ENCODE measurements at regions of chr11 and their contacts with region 1.

Region 1: DNA sequence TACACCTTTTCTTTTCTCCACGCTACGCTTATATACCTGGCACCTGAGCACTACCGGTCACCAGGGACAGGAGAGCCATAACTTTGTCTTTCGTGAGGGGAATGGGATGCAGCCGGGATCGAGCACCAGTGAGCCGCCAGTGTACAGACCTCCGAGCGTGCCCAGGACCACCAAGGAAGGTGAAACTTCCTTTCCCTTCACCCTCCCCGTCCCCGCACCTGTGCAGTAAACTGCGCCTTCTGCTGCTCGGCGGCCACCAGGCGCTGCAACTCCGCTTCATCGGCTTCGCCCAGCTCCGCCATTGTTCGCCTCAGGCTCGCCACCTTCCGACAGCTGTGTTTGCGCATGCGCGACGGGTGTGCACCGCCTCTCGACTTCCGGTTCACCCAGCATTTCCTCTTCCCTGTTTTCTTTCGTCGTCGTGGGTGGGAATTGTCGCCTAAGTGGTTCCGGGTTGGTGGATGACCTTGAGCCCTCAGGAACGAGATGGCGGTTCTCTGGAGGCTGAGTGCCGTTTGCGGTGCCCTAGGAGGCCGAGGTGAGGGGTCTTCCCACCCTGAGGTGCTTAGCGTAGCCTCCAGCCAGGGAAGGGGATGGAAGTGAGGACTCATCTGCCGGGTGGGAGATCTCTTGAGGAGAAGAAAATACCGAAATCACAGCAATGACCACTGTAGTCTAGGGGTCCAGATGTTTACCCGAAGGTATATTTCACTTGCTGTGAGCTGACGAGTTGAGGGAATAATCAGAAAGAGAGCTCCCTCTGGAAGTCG is at the starts of genes SDHD and TIMM8B:
- DNase-seq: peak; percentile 96
- H3K4me3 Mint-ChIP-seq: peak within 1 kb of the TSS; percentile 99
- H3K27ac Mint-ChIP-seq: peak within 1 kb of the TSS; percentile 96
- H3K4me1 Mint-ChIP-seq: peaks cover 66% of the 10 kb centered on the region
- H3K27me3 Mint-ChIP-seq: no peaks in the 10 kb centered on the region
- total RNA-seq, gene SDHD: 95.4 and 98.0 TPM in 2 replicates
- total RNA-seq, gene TIMM8B: 85.6 and 89.2 TPM in 2 replicates

Region 2: GRCh38 chr11:111766093-111766833 is 320.3 kb before region 1 on chr11 and contains the start of gene PPP2R1B:
- intact Hi-C with region 1: loop called (anchors 5 kb)
- DNase-seq: peak; percentile 60
- H3K4me3 Mint-ChIP-seq: peak within 1 kb of the TSS; percentile 96
- H3K27ac Mint-ChIP-seq: peak within 1 kb of the TSS; percentile 97
- H3K4me1 Mint-ChIP-seq: peaks cover 43% of the 10 kb centered on the region
- H3K27me3 Mint-ChIP-seq: no peaks in the 10 kb centered on the region
- total RNA-seq, gene PPP2R1B: 58.1 and 61.4 TPM in 2 replicates

Region 3: GRCh38 chr11:111878849-111879636 is 207.6 kb before region 1 on chr11 and contains the starts of genes CFAP68 and FDXACB1:
- intact Hi-C with region 1: loop called (anchors 1 kb)
- DNase-seq: peak; percentile 92
- H3K4me3 Mint-ChIP-seq: peak within 1 kb of the TSS; percentile 94
- H3K27ac Mint-ChIP-seq: peak within 1 kb of the TSS; percentile 100
- H3K4me1 Mint-ChIP-seq: peaks cover 26% of the 10 kb centered on the region
- H3K27me3 Mint-ChIP-seq: peaks cover 2% of the 10 kb centered on the region
- total RNA-seq, gene CFAP68: 17.7 and 22.3 TPM in 2 replicates
- total RNA-seq, gene FDXACB1: 7.9 and 9.4 TPM in 2 replicates

Region 4: DNA sequence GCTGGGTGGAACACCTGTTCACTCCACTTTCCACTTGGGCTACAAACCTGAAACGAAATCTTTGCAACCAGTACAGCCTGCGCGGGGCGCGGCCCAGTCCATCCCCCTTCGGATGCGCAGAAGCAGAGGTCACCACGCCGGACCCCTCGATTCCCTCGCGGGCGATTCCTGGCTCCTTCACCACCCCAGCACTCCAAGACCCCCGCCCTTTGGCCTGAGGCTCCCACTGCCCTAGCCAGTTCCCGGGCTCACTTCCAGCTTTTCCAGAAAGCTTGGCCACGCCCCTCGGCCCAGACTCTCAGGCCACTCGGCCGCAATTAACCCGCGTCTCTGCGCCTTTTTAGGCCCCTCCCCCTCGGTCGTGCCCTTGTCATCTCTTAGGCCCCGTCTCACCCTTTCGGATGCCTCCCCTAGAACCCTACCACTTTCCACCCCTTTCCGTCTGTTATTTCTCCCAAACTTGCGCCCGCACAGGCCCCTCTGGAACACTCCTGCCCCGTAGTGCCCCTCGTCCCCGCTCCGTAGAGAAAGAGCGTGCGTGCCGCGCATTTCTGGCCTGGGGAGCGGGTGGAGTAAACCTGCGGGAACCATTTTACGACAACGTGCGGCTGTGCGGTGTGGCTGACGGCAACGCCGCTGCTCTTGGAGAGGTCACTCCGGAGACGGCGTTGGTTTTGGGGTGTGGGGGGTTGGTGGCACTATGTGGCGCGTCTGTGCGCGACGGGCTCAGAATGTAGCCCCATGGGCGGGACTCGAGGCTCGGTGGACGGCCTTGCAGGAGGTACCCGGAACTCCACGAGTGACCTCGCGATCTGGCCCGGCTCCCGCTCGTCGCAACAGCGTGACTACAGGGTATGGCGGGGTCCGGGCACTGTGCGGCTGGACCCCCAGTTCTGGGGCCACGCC is 61.6 kb before region 1 on chr11 and contains the start of gene DLAT:
- intact Hi-C with region 1: loop called (anchors 1 kb)
- DNase-seq: peak; percentile 80
- H3K4me3 Mint-ChIP-seq: peak within 1 kb of the TSS; percentile 95
- H3K27ac Mint-ChIP-seq: peak within 1 kb of the TSS; percentile 100
- H3K4me1 Mint-ChIP-seq: peaks cover 14% of the 10 kb centered on the region
- H3K27me3 Mint-ChIP-seq: no peaks in the 10 kb centered on the region
- total RNA-seq, gene DLAT: 52.0 and 54.5 TPM in 2 replicates

Region 5: DNA sequence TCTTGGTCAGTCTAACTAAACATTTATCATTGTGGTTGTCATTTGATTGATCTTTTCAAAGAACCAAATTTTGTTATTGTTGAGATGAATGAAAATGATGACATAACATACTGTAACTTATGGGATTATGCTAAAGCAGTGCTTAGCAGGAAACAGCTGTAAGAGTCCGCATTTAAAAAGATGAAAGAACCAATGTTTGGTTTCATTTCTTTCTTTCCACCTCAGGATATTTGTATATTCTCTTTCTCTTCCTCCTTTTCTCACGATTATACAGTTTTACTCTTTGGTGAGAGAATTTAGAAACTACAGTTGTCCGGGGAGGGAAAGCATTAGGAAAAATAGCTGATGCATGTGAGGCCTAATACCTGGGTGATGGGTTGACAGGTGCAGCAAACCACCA is 35.9 kb before region 1 on chr11:
- intact Hi-C with region 1: no loop called
- DNase-seq: no peak
- H3K4me3 Mint-ChIP-seq: no peak overlapping the region
- H3K27ac Mint-ChIP-seq: no peak overlapping the region
- H3K4me1 Mint-ChIP-seq: peaks cover 12% of the 10 kb centered on the region
- H3K27me3 Mint-ChIP-seq: no peaks in the 10 kb centered on the region

Region 6: DNA sequence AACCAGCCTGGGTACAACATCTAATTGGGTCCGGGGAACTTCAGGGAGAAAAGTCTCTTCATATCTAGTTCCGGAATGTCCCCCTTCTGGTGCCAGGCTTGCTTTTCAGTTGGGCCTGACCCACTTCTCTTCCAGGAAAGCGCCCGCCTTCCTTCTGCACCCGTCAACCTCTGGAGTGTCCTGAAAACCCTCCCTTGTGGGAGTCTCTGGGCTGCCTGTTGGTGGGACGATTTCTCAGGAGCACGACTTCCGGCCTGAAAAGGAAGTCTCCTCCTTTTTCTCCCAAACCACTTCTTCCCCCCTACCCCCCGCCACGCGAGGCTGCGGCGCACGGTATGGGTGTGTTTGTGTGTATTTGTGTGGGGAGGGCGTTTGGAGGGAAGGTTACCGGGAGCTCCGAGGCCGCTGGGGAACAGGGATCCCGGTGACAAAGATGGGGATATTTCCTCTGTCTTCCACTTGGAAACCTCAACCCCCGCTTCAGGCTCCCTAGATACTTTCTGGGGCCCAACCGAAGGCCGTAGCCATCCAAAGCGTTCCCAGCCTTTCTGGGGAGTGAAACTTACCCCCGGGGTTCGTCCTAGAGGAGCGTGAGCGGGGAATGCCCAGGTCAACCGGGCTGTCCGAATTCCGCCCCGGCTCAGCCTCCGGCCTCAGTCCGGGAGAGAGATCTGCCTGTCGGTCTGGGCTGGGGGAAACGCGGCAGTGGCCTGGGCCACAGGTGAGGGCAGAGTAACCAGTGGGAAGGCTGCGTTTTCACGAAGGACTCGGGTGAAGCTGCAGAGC is 12.4 kb before region 1 on chr11 and contains the start of gene NKAPD1:
- intact Hi-C with region 1: loop called (anchors 1 kb)
- DNase-seq: peak; percentile 77
- H3K4me3 Mint-ChIP-seq: peak within 1 kb of the TSS; percentile 94
- H3K27ac Mint-ChIP-seq: peak within 1 kb of the TSS; percentile 95
- H3K4me1 Mint-ChIP-seq: peaks cover 39% of the 10 kb centered on the region
- H3K27me3 Mint-ChIP-seq: no peaks in the 10 kb centered on the region
- total RNA-seq, gene NKAPD1: 29.1 and 33.0 TPM in 2 replicates

Region 7: GRCh38 chr11:112280268-112281126 is 193.9 kb after region 1 on chr11:
- intact Hi-C with region 1: loop called (anchors 2 kb)
- DNase-seq: peak; percentile 64
- H3K4me3 Mint-ChIP-seq: peak overlapping the region; percentile 85
- H3K27ac Mint-ChIP-seq: peak overlapping the region; percentile 77
- H3K4me1 Mint-ChIP-seq: peaks cover 39% of the 10 kb centered on the region
- H3K27me3 Mint-ChIP-seq: peaks cover 4% of the 10 kb centered on the region